MCF 10A (cell line): ENCODE measurements at regions of chr22 and their contacts with region 1.

Region 1: DNA sequence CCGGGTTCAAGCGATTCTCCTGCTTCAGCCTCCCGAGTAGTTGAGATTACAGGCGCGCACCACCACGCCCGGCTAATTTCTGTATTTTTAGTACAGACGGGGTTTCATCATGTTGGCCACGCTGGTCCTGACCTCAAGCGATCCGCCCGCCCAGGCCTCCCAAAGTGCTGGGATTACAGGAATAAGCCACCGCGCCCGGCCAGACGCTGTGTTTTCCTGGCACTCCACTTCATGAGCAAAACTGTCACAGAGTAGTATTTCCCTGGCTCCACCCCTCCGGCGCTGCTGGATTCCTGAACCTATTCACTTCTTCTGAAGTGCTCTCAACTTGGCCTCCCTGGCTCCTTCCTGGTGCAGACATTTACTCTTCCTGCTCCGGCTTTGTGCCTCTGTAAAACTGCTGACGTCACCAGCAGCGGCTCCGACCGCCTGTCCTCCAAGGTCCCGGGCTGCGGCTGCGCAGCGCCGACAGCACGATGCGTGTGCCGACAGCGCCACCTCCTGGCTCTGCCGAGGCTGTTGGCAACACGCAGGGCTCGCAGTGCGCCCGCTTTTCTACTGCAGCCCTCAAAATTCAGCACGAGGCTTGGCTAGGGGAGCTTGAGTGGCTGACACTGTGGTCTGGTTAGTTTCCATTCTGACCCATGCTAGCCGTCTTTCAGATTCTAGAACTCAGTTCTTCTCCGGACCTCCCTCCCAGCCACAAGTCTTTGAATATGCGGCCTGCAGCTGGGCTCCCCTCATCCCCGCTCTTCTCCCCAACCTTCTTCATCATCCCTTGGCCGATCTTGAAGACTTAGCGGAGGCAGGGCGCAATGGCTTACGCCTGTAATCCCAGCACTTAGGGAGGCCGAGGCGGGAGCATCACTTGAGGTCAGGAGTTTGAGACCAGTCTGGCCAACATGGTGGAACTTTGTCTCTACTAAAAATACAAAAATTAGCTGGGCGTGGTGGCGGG is 36.6 kb downstream of the APOL3 start:
- DNase-seq: peak; percentile 88
- H3K4me3 Mint-ChIP-seq: peak overlapping the region; percentile 66
- H3K27ac Mint-ChIP-seq: peak overlapping the region; percentile 73
- H3K4me1 Mint-ChIP-seq: peaks cover 9% of the 10 kb centered on the region
- H3K27me3 Mint-ChIP-seq: peaks cover 28% of the 10 kb centered on the region
- CTCF ChIP-seq: peak; percentile 93

Region 2: DNA sequence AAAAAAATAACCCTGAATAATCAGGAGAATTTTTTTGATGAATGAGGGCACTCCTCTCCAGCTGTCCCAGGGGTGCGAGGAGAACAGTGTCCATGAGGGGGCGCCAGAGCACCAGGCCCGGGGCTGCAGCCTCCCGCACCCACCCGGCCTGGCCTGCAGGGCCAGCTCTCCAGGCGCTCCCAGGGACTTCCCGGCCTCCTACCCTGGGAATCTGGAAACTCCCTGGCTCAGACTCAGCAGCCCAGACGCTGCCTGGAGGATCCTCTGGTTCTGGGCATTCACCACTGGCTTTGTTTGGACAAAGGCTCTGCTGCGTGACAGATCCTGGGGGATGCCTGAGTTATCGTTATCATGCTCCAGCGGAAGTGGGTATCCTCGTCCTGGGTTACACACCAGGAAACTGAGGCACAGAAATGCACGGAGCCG is 693.0 kb before region 1 on chr22:
- CTCF ChIA-PET with region 1: interaction called, 3 read pairs
- POLR2A ChIA-PET with region 1: no interaction called
- intact Hi-C with region 1: loop called (anchors 2 kb)
- DNase-seq: peak; percentile 84
- H3K4me3 Mint-ChIP-seq: no peak overlapping the region
- H3K27ac Mint-ChIP-seq: no peak overlapping the region
- H3K4me1 Mint-ChIP-seq: peaks cover 10% of the 10 kb centered on the region
- H3K27me3 Mint-ChIP-seq: no peaks in the 10 kb centered on the region
- CTCF ChIP-seq: peak; percentile 94

Region 3: DNA sequence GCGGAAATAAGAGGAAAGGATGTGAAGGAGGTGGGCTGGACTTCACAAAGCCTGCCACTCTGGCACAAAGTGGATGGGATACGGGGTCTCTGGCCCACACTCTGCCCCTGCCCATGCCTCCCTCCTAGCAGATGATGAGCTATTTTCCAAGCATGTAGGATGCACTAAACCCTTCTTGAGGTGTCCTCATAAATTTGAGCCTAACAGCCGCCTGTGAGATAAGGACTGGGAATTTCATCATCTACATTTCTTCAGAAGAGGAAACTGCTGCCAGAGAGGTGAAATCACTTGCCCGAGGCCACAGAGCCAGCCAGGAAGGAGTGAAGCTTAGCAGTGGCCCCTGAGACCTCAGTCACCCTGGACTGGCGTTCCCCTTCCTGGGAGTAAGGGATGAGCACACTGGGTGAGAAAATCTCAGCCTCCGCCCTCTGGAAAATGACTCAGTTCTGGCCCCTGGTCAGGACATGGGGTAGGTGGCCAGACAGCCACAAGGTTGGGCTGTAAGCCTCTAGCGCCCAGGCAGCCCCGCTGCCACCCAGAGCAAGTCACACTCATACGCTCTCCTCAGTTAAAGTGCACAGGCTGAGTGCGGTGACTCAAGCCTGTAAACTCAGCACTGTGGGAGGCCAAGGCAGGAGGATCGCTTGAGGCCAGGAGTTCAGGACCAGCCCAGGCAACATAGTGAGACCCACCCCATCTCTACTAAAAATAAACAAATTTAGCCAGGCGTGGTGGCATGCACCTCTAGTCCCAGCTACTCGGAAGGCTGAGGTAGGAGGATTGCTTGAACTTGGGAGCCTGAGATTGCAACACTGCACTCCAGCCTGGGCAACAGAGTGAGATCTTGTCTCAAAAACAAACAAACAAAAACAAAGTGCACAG is 534.6 kb before region 1 on chr22:
- CTCF ChIA-PET with region 1: no interaction called
- POLR2A ChIA-PET with region 1: no interaction called
- intact Hi-C with region 1: loop called (anchors 1 kb)
- DNase-seq: peak; percentile 97
- H3K4me3 Mint-ChIP-seq: no peak overlapping the region
- H3K27ac Mint-ChIP-seq: peak overlapping the region; percentile 36
- H3K4me1 Mint-ChIP-seq: peaks cover 32% of the 10 kb centered on the region
- H3K27me3 Mint-ChIP-seq: no peaks in the 10 kb centered on the region
- CTCF ChIP-seq: no peak

Region 4: GRCh38 chr22:35930933-35931332 is 193.0 kb before region 1 on chr22:
- CTCF ChIA-PET with region 1: interaction called, 28 read pairs
- POLR2A ChIA-PET with region 1: no interaction called
- intact Hi-C with region 1: loop called (anchors 1 kb)
- DNase-seq: peak; percentile 63
- H3K4me3 Mint-ChIP-seq: no peak overlapping the region
- H3K27ac Mint-ChIP-seq: peak overlapping the region; percentile 21
- H3K4me1 Mint-ChIP-seq: no peaks in the 10 kb centered on the region
- H3K27me3 Mint-ChIP-seq: no peaks in the 10 kb centered on the region
- CTCF ChIP-seq: peak; percentile 54

Region 5: DNA sequence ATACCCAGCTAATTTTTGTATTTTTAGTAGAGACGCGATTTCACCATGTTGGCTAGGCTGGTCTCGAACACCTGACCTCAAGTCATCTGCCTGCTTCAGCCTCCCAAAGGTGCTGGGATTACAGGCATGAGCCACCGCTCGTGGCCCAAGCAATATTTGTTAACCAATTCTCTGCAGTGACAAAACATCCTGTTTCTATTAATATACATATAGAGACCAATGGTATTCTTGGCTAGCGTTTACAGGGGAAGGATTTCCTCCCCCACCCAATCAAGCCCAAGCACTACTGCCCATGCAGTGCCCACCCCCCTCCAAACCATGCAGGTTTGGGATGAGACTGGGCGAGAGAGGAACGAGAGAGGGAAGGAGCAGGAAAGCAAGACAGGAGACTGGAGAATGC is 16.5 kb before region 1 on chr22:
- CTCF ChIA-PET with region 1: no interaction called
- POLR2A ChIA-PET with region 1: no interaction called
- intact Hi-C with region 1: no loop called
- DNase-seq: no peak
- H3K4me3 Mint-ChIP-seq: no peak overlapping the region
- H3K27ac Mint-ChIP-seq: no peak overlapping the region
- H3K4me1 Mint-ChIP-seq: peaks cover 10% of the 10 kb centered on the region
- H3K27me3 Mint-ChIP-seq: no peaks in the 10 kb centered on the region
- CTCF ChIP-seq: no peak

Region 6: GRCh38 chr22:36191106-36191836 is 67.3 kb after region 1 on chr22:
- CTCF ChIA-PET with region 1: no interaction called
- POLR2A ChIA-PET with region 1: no interaction called
- intact Hi-C with region 1: no loop called
- DNase-seq: no peak
- H3K4me3 Mint-ChIP-seq: no peak overlapping the region
- H3K27ac Mint-ChIP-seq: no peak overlapping the region
- H3K4me1 Mint-ChIP-seq: no peaks in the 10 kb centered on the region
- H3K27me3 Mint-ChIP-seq: peaks cover 39% of the 10 kb centered on the region
- CTCF ChIP-seq: no peak